ENCODE measurements at regions of chr3 and their contacts with region 1.

Region 1: GRCh38 chr3:192444096-192444790 is 283.1 kb downstream of the FGF12 start:
- DNase-seq: peak; percentile 73
- ATAC-seq: peak; percentile 75

Region 2: DNA sequence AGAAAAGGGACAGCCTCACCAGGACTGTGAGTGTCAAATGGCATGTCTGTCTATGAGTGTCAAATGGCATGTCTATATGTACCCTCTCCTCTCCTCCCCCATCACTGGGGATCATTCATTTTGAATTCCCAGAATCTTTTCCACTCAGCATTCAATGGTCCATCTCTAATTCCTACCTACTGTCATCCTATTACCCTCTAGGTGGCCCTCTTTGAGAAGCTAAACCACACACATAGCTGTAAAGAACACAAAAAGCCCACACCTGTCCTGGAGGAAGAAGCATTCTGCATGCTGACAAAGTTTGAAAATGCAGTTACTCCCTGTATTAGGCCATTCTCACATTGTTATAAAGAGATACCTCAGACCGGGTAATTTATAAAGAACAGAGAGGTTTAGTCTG is 1029.5 kb before region 1 on chr3:
- intact Hi-C with region 1: loop called (anchors 5 kb)
- DNase-seq: no peak
- ATAC-seq: no peak

Region 3: DNA sequence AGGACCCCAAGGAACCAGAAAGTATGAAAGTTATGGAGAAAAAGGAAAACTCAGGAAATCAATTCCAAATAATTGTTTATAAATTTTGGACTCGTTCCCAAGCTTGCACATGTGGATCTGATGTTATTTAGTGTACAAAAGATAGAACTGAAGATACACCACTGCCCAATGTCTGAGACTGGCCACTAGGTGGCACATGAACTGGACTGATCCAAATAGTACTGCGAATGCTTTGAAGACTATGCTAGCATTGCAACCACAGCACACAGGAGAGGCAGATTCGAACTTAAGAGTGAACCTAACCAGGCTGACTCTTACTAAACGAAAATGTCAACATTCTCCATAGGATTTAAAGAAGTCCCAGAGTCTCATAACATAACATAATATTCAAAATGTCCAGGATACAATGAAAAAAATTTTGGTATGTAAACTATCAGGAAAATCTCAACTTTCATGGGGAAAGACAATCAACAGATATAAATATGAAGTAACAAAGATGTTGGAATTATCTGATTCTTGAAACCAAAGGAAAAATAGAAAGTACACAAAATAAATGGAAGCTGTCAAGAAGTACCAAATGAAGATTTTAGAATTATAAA is 313.6 kb before region 1 on chr3:
- intact Hi-C with region 1: loop called (anchors 5 kb)
- DNase-seq: no peak
- ATAC-seq: no peak

Region 4: DNA sequence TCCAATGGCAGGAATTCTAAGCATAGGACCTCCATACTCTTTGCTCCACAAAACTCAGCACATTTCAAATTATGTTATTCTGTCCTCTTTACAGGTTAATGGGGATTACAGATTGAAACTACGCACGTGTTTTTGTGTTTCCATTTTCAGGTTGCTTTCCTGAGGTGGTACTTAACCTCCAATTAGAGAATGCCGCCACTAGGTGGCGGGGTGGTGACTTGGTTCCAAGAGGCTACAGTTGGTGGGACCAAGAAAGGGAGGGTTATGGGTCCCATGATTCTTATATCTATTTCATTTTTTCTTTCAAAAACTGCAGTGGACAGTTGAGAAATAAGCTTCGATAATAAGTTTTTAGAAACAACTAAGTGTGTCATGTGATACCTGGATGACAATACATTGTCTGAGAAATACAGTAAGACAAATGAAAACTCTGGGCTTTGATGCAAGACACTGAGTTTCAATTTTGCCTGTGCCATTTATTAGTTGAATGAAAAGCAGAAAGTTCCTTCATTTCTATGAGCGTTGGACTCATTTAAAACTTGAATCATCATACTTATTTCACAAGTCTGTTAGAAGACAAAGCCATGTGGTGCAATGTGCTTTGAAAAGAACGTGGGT is 255.9 kb before region 1 on chr3:
- intact Hi-C with region 1: loop called (anchors 5 kb)
- DNase-seq: peak; percentile 73
- ATAC-seq: no peak

Region 5: GRCh38 chr3:192399767-192400166 is 44.5 kb before region 1 on chr3:
- intact Hi-C with region 1: no loop called
- DNase-seq: no peak
- ATAC-seq: no peak

Region 6: DNA sequence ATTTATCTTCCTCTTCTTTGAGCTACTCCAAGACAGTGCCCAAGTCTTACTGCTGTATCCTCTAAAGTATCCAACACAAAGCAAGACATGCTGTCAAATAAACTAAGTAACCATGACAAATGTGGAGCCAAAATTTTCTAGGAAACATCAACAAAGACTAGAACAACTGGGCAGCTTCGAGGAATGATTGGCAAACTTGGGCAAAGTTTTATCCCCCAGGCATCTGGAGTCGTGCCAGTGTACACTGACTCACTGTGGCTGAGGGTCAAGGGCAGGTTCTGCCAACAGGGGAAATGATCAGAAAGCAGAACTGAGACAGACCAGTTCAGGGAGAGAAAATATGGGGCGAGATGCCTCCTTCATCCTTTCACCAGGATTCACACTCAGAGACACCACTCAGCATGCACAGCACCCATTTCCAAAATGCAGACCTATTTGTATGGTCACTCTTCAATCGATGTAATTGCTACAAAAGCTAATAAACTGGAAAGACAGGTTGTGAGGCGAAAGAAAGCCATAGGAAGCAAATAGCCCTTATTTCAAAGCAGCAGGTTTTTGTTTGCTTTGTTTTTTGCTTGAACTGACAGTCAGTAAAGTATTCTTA is 407.7 kb after region 1 on chr3:
- intact Hi-C with region 1: no loop called
- DNase-seq: no peak
- ATAC-seq: peak; percentile 31

Region 7: GRCh38 chr3:193030276-193030675 is 586.0 kb after region 1 on chr3:
- intact Hi-C with region 1: loop called (anchors 10 kb)
- DNase-seq: no peak
- ATAC-seq: no peak

Measured in Right ventricle myocardium inferior (tissue), 1 donor.